Activated T-helper 1 cell treated with anti-CD3 and anti-CD28 coated beads, Interleukin-12 subunit alpha, Interleukin-12 subunit beta, Interleukin-2, Interleukin-4 antibody, amounts not matched to agents 30 ng/mL and 10 ng/mL and 1 ng/mL, durations not matched to agents 14 hours and 24 hours and 36 hours (primary cell): ENCODE measurements at regions of chr2 and their contacts with region 1.

Region 1: GRCh38 chr2:44361330-44362206 is at the starts of genes CAMKMT and PREPL:
- DNase-seq: peak; percentile 97
- H3K4me3 Mint-ChIP-seq: peak within 1 kb of the TSS; percentile 99
- H3K27ac Mint-ChIP-seq: peak within 1 kb of the TSS; percentile 100
- H3K4me1 Mint-ChIP-seq: peaks cover 46% of the 10 kb centered on the region
- H3K27me3 Mint-ChIP-seq: no peaks in the 10 kb centered on the region
- total RNA-seq, gene CAMKMT: 13.4 and 14.2 TPM in 2 replicates
- total RNA-seq, gene PREPL: 29.4 and 30.5 TPM in 2 replicates

Region 2: GRCh38 chr2:43773876-43774613 is 587.5 kb before region 1 on chr2 and contains the start of gene DYNC2LI1:
- intact Hi-C with region 1: loop called (anchors 10 kb)
- DNase-seq: peak; percentile 71
- H3K4me3 Mint-ChIP-seq: peak within 1 kb of the TSS; percentile 92
- H3K27ac Mint-ChIP-seq: peak within 1 kb of the TSS; percentile 79
- H3K4me1 Mint-ChIP-seq: peaks cover 19% of the 10 kb centered on the region
- H3K27me3 Mint-ChIP-seq: peaks cover 3% of the 10 kb centered on the region
- total RNA-seq, gene DYNC2LI1: 6.2 and 6.6 TPM in 2 replicates

Region 3: GRCh38 chr2:43995733-43996533 is 365.6 kb before region 1 on chr2 and contains the start of gene LRPPRC:
- intact Hi-C with region 1: loop called (anchors 1 kb)
- DNase-seq: peak; percentile 85
- H3K4me3 Mint-ChIP-seq: peak within 1 kb of the TSS; percentile 95
- H3K27ac Mint-ChIP-seq: peak within 1 kb of the TSS; percentile 94
- H3K4me1 Mint-ChIP-seq: peaks cover 45% of the 10 kb centered on the region
- H3K27me3 Mint-ChIP-seq: peaks cover 2% of the 10 kb centered on the region
- total RNA-seq, gene LRPPRC: 150 and 162 TPM in 2 replicates

Region 4: DNA sequence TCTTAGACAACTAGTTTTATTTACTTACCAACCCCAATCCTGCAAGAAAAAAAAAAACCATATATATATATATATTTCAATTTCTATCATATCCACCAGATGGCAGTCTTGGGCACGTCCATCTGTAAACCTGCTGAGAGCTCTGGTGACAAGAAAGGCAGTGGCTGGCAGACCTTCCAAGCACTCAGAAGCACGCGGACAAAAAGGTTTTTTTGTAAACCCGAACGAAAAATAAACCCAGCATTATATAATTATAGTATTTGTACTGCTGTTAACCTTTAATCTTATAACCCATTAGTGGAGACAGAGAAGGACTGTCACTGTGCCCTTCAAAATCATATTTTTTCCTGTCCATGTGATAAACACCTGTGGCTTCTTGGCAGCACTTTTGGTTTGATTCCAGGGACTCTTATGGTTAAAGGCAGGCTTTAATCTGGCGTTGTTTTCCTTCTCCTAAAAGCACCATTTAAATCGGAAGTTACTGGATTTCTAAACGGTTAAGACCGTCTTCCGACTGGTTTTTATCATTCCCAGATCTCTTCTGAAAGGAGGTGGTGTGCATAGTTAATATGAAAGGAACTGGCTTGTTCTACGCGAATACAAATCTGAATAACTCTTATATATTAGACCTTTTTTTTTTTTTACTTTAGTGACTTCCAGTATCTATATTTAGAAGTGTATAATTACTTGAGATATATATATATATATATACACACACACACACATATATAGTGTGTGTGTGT is 117.3 kb before region 1 on chr2:
- intact Hi-C with region 1: loop called (anchors 2 kb)
- DNase-seq: peak; percentile 27
- H3K4me3 Mint-ChIP-seq: peak overlapping the region; percentile 55
- H3K27ac Mint-ChIP-seq: no peak overlapping the region
- H3K4me1 Mint-ChIP-seq: peaks cover 9% of the 10 kb centered on the region
- H3K27me3 Mint-ChIP-seq: peaks cover 12% of the 10 kb centered on the region

Region 5: GRCh38 chr2:44578421-44579135 is 217.0 kb after region 1 on chr2:
- intact Hi-C with region 1: loop called (anchors 2 kb)
- DNase-seq: no peak
- H3K4me3 Mint-ChIP-seq: peak overlapping the region; percentile 24
- H3K27ac Mint-ChIP-seq: peak overlapping the region; percentile 76
- H3K4me1 Mint-ChIP-seq: peaks cover 29% of the 10 kb centered on the region
- H3K27me3 Mint-ChIP-seq: no peaks in the 10 kb centered on the region

Region 6: DNA sequence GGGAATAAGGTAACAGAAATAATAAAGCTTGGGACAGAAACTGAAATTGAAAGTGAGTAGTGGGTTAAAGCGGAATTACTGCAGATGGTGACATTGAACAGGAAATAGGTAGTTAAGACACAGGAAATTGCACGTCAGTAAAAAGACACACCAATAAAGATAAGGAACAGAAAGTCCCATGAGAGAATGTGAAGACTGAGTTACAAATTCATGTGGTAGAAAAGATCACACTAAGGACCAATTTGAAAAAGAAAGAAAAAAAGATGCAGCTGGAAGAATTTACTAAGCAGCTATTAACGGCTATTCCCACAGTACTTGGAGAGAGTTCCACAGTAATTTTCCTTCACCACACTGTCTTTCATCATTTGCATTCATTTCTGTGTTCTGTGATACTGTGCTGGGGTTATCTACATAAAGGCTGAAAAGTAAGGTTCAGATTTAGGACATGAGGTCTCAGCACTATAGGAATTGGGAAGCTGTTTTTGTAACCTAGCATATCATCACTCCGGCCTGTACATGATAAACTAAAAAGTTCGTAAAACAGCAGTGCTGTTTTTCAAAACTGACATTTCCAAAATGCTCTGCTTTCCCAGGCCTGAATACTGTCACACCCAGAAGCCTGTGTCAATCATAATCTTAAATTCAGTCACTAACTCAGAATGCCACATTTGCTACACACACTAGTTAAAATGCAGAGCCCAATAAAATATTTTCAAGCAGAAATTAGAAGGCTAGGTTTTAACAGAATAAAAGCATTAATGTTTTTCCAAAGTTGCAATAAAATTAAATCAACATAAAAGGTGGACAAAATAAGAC is 1206.6 kb after region 1 on chr2:
- intact Hi-C with region 1: loop called (anchors 1 kb)
- DNase-seq: peak; percentile 10
- H3K4me3 Mint-ChIP-seq: peak overlapping the region; percentile 77
- H3K27ac Mint-ChIP-seq: peak overlapping the region; percentile 94
- H3K4me1 Mint-ChIP-seq: peaks cover 22% of the 10 kb centered on the region
- H3K27me3 Mint-ChIP-seq: no peaks in the 10 kb centered on the region